ENCODE measurements at regions of chr12 and their contacts with region 1.

Region 1: GRCh38 chr12:5796171-5796958 is 148.7 kb downstream of the ANO2 start:
- DNase-seq: peak; percentile 63 to 83
- H3K4me3 ChIP-seq: no peak overlapping the region
- H3K27ac ChIP-seq: no peak overlapping the region
- H3K4me1 ChIP-seq: peaks cover 0 to 9% (median 0%) of the 10 kb centered on the region in 4 donors
- H3K27me3 ChIP-seq: no peaks in the 10 kb centered on the region
- CTCF ChIP-seq: peak in 5 of 7 experiments; percentile 67 to 95 (median 76)
- EP300 ChIP-seq: no peak
- POLR2A ChIP-seq: peak in 1 of 4 donors; percentile 90

Region 2: GRCh38 chr12:5428332-5429221 is 367.8 kb before region 1 on chr12:
- intact Hi-C with region 1: loop called (anchors 5 kb)
- DNase-seq: peak in 1 of 2 donors; percentile 75
- H3K4me3 ChIP-seq: no peak overlapping the region
- H3K27ac ChIP-seq: no peak overlapping the region
- H3K4me1 ChIP-seq: peaks cover 23 to 49% (median 47%) of the 10 kb centered on the region in 4 donors
- H3K27me3 ChIP-seq: peaks cover 7 to 68% (median 45%) of the 10 kb centered on the region in 3 donors
- CTCF ChIP-seq: peak in 5 of 7 experiments; percentile 36 to 50 (median 43)
- EP300 ChIP-seq: no peak
- POLR2A ChIP-seq: no peak